H1 (cell line): ENCODE measurements at regions of chr12 and their contacts with region 1.

Region 1: GRCh38 chr12:6312529-6313325 is 2.2 kb downstream of the PLEKHG6 start:
- DNase-seq: peak in 1 of 2 experiments; percentile 83
- H3K4me3 ChIP-seq: no peak overlapping the region
- H3K27ac ChIP-seq: no peak overlapping the region
- H3K4me1 ChIP-seq: peaks cover 4 to 28% (median 20%) of the 10 kb centered on the region in 4 experiments
- H3K27me3 ChIP-seq: peaks cover 0 to 4% (median 2%) of the 10 kb centered on the region in 4 experiments; a peak in 4 of 7 replicates
- CTCF ChIP-seq: no peak
- EP300 ChIP-seq: no peak
- POLR2A ChIP-seq: no peak
- RAD21 ChIP-seq: no peak

Region 2: GRCh38 chr12:5678176-5678575 is 634.6 kb before region 1 on chr12:
- CTCF ChIA-PET with region 1: no interaction called
- POLR2A ChIA-PET with region 1: no interaction called
- DNase-seq: no peak
- H3K4me3 ChIP-seq: no peak overlapping the region
- H3K27ac ChIP-seq: no peak overlapping the region
- H3K4me1 ChIP-seq: no peaks in the 10 kb centered on the region
- H3K27me3 ChIP-seq: no peaks in the 10 kb centered on the region
- CTCF ChIP-seq: no peak
- EP300 ChIP-seq: no peak
- POLR2A ChIP-seq: no peak
- RAD21 ChIP-seq: no peak

Region 3: GRCh38 chr12:6072302-6072752 is 240.4 kb before region 1 on chr12:
- CTCF ChIA-PET with region 1: no interaction called
- POLR2A ChIA-PET with region 1: no interaction called
- DNase-seq: no peak
- H3K4me3 ChIP-seq: no peak overlapping the region
- H3K27ac ChIP-seq: no peak overlapping the region
- H3K4me1 ChIP-seq: peaks cover 0 to 13% (median 7%) of the 10 kb centered on the region in 4 experiments; a peak in 4 of 7 replicates
- H3K27me3 ChIP-seq: no peaks in the 10 kb centered on the region
- CTCF ChIP-seq: no peak
- EP300 ChIP-seq: no peak
- POLR2A ChIP-seq: no peak
- RAD21 ChIP-seq: peak in 1 of 2 experiments; percentile 5; a peak in 1 of 4 replicates

Region 4: DNA sequence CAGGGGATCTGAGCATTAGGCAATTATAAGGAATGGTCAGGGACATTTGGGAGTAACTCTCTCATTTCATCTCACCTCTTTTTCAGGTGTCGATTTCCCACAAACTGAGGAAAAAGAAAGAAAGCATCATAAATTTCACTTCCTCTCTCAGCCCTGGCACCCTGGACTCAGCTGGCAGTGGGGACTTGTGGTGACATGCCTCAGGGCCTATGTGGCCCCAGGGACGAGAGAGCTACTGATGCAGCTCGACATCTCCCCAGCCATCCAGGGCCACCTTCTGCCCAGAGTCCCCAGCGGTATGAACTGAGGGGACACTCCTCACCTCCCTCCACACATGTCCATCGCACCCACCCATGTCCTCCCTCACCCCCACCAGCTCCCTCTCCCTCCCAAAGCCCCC is 17.5 kb after region 1 on chr12:
- CTCF ChIA-PET with region 1: interaction called, 20 read pairs
- POLR2A ChIA-PET with region 1: interaction called, 13 read pairs
- DNase-seq: no peak
- H3K4me3 ChIP-seq: no peak overlapping the region
- H3K27ac ChIP-seq: no peak overlapping the region
- H3K4me1 ChIP-seq: peaks cover 0 to 33% (median 18%) of the 10 kb centered on the region in 4 experiments; a peak in 6 of 7 replicates
- H3K27me3 ChIP-seq: no peaks in the 10 kb centered on the region
- CTCF ChIP-seq: no peak
- EP300 ChIP-seq: no peak
- POLR2A ChIP-seq: no peak
- RAD21 ChIP-seq: no peak

Region 5: GRCh38 chr12:6384499-6385436 is 72.0 kb after region 1 on chr12:
- CTCF ChIA-PET with region 1: no interaction called
- POLR2A ChIA-PET with region 1: no interaction called
- DNase-seq: no peak
- H3K4me3 ChIP-seq: no peak overlapping the region; a peak in 2 of 8 replicates
- H3K27ac ChIP-seq: no peak overlapping the region
- H3K4me1 ChIP-seq: peaks cover 0 to 25% (median 20%) of the 10 kb centered on the region in 4 experiments; a peak in 6 of 7 replicates
- H3K27me3 ChIP-seq: peaks cover 0 to 26% (median 20%) of the 10 kb centered on the region in 4 experiments; a peak in 6 of 7 replicates
- CTCF ChIP-seq: no peak
- EP300 ChIP-seq: no peak
- POLR2A ChIP-seq: no peak
- RAD21 ChIP-seq: no peak